ENCODE measurements at regions of chr14 and their contacts with region 1.

Region 1: GRCh38 chr14:99884834-99885648 is 91.8 kb downstream of the EML1 start:
- DNase-seq: peak in 2 of 5 donors; percentile 75 to 86
- H3K4me3 ChIP-seq: no peak overlapping the region
- H3K27ac ChIP-seq: no peak overlapping the region
- H3K4me1 ChIP-seq: no peaks in the 10 kb centered on the region
- H3K27me3 ChIP-seq: no peaks in the 10 kb centered on the region
- CTCF ChIP-seq: peak; percentile 82

Region 2: GRCh38 chr14:99261912-99262787 is 622.9 kb before region 1 on chr14:
- intact Hi-C with region 1: no loop called
- DNase-seq: no peak
- H3K4me3 ChIP-seq: no peak overlapping the region
- H3K27ac ChIP-seq: no peak overlapping the region
- H3K4me1 ChIP-seq: peaks cover 0 to 2% (median 0%) of the 10 kb centered on the region in 3 donors
- H3K27me3 ChIP-seq: peaks cover 11% of the 10 kb centered on the region
- CTCF ChIP-seq: no peak

Region 3: DNA sequence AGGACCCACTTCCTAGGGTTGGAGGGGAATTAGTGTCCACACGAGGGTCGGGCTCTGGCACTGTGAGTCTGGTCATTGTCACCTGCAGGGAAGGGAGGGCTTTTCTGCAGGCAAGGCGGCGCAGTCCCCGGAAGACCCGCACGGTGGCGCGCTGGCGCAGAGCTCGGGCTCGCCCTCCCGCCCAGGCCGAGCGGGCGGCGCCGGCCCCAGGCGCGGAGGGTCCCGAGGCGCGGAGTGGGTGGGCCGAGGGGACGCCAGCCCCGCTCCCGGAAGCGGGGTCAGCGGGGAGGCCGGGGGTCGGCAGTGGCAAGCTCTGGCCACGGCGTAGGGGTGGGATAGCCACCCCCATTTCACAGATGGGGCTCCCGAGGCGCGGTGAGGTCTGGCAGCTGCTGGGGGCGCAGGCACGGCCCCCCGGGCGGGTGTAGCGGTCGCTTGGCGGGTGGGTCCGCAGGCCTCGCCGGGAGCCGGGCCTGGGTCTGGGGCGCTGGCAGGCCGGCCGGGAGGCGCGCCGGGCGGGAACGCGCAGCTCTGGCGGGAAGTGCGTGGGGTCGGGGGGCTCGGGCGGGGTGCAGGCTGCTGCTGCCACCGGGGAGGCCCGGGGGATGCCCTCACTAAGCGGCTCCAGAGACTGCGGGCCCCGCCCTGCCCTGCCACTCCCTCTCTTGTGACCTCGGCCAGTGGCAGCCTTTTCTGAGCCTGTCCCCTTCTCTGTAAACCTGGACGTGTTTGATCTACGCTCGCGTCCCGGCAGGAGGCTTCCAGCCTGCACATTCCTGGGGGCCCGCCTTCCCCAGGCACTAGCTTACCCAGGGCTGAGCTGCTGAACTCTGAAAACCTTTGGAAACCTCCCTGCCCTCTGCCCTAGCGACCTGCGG is 154.8 kb before region 1 on chr14:
- intact Hi-C with region 1: loop called (anchors 5 kb)
- DNase-seq: peak; percentile 82 to 90 (median 87)
- H3K4me3 ChIP-seq: no peak overlapping the region
- H3K27ac ChIP-seq: no peak overlapping the region
- H3K4me1 ChIP-seq: peaks cover 0 to 14% (median 0%) of the 10 kb centered on the region in 3 donors
- H3K27me3 ChIP-seq: no peaks in the 10 kb centered on the region
- CTCF ChIP-seq: peak; percentile 93